AG04449 (cell line): ENCODE measurements at regions of chr15 and their contacts with region 1.

Region 1: DNA sequence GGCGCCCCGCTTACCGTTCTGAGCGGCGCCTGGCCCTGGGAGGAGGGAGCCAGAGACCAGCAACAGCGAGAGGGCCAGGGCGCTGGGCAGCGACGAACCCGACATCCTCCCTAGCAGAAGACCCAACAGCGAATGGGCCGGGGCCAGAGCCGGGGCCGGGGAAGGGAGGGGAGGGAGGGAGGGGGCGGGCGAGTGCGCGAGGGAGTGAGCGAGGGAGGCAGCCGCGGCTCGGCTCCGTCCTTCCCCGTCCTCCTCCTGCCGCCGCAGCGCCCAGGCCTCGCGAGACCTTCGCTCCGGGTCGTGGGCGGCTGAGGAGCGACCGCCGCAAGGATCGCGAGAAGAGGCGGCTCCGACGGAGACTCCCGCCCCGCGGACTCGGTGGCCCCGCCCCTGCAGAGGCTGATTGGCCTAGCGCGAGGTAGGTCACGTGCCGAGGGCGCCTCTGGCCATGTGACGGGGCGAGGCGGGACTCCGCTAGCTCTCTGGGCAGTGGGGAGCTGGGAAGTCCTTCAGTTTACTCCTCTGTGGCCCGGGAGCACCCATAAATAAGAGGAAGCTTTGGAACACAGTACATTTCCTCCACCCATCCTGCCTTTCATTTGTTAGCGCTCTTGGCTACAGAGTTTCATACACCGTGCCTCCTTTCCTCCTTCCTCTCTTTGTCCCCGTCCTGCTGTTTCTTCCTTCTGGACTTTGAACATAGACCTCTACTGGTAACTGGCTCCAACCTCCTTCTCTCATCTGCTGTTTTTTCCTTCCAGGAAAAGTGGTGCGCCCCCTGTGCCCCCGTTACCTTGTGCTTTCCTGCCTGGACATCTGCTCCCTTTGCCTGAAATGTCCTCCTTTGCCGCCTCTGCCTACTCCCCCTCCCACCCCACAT is at the start of gene NPTN:
- DNase-seq: peak; percentile 81
- H3K4me3 ChIP-seq: peak within 1 kb of the TSS; percentile 92
- CTCF ChIP-seq: no peak

Region 2: DNA sequence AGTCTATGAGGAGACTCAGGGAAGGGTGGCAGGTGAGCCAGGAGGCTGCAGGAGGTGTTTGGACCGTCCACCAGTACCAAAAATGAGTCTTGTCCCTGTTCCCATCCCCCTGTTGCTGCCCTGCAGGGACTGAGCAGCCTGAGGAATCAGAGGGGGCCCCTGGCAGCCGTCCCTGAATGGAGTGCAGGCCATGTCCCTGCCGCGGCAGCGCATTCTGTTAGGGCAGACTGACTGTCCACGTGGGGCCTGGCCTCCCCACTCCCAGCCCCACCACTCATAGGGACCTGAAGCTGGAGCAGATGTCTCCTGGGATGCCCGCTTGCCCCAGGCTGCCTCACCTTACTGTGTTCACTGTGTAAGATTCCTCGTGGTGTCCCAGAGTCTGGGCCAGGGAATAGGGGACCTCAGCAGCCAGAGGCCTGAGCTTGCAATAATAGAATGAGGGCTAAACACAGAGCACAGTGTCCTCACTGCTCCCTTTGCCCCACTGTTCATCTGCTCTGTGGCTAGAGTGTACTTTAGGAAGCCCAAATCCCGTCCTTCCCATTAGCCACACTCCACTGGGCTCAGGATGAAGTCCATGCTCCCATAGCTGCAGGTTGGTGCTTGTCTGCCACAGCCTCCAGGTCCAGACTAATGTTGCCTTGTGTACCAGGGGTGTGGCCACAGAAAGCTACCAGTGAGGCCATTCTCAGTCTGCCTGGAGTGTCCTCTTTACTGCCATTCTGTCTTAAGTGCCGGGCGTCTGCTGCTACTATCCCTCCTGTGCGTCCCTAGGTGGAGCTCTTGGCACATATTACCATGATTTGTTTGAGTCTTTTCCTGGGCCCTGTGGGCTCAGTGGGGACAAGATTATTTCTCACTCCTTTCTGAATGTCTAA is 327.8 kb before region 1 on chr15:
- CTCF ChIA-PET with region 1: interaction called, 26 read pairs
- POLR2A ChIA-PET with region 1: no interaction called
- DNase-seq: peak; percentile 29
- H3K4me3 ChIP-seq: no peak overlapping the region
- CTCF ChIP-seq: peak; percentile 65

Region 3: GRCh38 chr15:73573572-73573971 is 59.8 kb before region 1 on chr15:
- CTCF ChIA-PET with region 1: interaction called, 25 read pairs
- POLR2A ChIA-PET with region 1: interaction called, 8 read pairs
- DNase-seq: peak; percentile 70
- H3K4me3 ChIP-seq: no peak overlapping the region
- CTCF ChIP-seq: no peak

Region 4: DNA sequence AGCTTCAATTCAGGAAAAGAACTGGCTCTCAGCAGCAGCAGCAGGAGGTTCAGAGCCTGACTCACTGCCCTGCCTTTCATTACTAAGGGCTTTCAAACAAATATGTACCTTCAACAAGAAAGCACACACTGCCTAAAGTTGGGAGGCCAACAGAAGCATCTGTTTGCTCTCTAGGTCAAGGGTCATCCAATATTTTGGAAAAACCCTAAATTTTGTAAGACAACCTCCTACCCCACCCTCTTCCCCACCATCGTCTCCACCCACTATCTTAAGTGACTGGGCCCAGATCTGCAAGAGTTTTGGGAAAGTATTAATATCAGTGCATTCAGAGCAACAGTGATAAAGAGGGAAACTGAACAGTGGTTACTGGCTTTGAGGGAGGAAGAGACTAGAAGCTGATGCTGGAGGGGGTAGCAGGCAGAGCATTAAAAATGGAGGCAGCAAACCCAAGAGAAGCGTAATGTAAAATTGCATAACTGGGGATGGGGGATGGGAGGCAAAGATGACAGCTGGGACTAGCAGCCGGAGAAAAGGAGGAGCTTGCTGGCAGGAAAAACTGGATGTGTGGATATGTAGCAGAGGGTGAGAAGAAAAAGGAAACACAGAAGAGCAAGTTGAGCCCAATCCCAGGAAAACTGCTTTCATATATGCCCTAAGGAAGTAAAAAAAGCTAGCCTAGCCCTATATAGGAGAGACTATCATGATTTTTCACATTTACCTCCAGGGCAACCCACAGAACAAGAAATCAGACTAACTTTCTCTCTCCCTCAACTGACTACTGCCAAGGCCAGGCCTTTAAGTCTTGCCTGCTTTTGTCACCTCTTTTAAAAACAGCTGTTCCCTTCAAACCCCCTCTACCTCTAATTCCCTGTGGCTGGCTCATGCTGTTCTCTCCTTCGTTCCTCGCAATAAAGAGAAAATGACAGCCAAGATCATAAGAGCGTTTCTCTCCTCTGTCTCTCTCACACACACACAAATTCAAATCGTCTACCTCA is 31.6 kb before region 1 on chr15:
- CTCF ChIA-PET with region 1: interaction called, 100 read pairs
- POLR2A ChIA-PET with region 1: interaction called, 4 read pairs
- DNase-seq: no peak
- H3K4me3 ChIP-seq: no peak overlapping the region
- CTCF ChIP-seq: no peak

Region 5: DNA sequence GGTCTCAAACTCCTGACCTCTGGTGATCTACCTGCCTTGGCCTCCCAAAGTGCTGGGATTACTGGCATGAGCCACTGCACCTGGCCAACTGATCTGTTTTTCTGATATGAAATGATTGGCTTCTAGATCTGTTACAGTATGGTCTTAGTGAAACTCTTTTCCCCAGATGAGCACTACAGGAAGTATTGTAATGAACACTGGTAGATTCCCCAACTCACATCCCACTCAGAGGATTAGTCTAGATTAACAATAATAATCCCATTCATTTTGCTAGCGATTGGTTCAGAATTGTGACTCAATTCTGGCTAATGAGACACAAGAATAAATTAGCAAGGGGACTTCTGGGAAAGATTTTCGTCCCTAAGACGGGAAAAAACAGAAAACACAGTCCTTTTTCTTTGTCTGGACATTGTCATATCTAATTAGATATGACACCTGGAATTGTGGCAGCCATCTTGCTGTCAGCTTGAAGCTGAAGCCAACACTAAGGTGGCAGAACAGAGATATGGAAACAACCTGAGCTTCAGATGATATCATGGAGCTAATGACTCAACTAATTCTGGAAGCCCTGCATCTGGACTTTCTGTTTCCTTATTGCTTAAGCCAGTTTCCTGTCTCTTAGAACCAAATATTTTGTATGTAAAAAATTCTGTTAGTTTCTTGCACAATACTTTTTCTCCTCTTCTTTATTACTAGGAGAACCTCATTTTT is 17.2 kb after region 1 on chr15:
- CTCF ChIA-PET with region 1: interaction called, 74 read pairs
- POLR2A ChIA-PET with region 1: no interaction called
- DNase-seq: no peak
- H3K4me3 ChIP-seq: no peak overlapping the region
- CTCF ChIP-seq: no peak

Region 6: DNA sequence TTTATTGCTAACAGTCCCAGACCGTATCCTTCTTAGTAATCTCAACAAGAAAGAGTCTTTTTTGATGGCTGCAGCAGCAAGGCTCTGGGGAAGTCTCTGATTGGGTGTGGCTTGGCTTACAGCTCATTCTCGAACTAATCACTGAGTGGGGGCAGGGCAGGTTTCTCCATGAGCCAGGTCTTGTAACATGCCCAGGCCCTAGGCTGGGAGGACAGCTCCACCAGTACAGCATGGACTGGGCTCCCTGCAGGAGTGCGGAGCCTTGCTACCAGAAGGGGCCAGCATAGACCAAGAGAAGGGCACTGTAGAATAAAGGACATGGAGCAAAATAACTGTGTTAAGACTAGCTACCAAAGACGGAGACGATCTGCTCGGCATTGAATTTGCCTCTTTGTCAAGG is 58.0 kb after region 1 on chr15:
- CTCF ChIA-PET with region 1: interaction called, 459 read pairs
- POLR2A ChIA-PET with region 1: interaction called, 7 read pairs
- DNase-seq: no peak
- H3K4me3 ChIP-seq: no peak overlapping the region
- CTCF ChIP-seq: no peak

Region 7: DNA sequence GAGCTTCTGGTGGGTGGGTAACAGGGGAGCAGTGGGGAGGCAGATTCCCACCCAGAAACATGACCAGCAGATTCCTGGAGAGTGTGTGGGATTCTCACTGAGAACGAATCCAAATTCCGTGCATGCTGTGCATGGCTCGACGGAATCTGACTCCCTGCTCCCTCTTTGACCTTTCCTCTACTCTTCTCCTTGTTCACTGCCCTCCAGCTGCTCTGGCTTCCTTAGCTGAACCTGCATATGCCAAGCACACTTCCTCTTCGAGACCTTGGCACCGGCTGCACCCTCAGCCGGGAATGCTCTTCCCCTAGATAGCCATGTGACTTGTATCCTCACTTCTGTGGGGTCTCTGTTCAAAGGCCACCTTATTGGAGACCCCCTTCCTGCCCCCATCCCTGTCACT is 113.5 kb after region 1 on chr15:
- CTCF ChIA-PET with region 1: no interaction called
- POLR2A ChIA-PET with region 1: no interaction called
- DNase-seq: no peak
- H3K4me3 ChIP-seq: no peak overlapping the region
- CTCF ChIP-seq: no peak

Region 8: GRCh38 chr15:73781038-73781925 is 147.9 kb after region 1 on chr15:
- CTCF ChIA-PET with region 1: interaction called, 15 read pairs
- POLR2A ChIA-PET with region 1: no interaction called
- DNase-seq: no peak
- H3K4me3 ChIP-seq: no peak overlapping the region
- CTCF ChIP-seq: peak; percentile 22